ENCODE measurements at regions of chr12 and their contacts with region 1.

Region 1: GRCh38 chr12:88960213-88960878 is 380.1 kb upstream of the KITLG start:
- DNase-seq: no peak
- ATAC-seq: no peak

Region 2: DNA sequence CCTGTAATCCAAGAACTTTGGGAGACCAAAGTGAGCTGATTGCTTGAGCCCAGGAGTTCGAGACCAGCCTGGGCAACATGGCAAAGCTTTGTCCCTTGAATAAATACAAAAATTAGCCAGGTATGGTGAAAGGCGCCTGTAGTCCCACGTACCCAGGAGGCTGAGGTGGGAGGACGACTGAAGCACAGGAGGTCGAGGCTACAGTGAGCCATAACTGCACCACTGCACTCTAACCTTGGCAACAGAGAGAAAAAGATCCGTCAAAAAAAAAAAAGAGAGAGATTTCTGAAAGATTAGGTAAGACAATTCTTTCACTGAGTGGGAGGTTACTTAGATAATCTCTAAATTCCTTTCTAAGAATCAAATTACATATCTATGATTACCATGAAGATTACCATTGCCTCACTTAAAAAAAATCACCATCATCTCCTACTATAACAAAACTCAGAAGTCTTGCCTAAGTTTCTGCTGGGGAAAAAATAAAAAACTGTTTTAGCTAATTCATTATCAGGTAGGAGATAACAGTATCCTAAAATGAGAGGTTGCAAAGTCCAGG is 25.2 kb after region 1 on chr12:
- intact Hi-C with region 1: loop called (anchors 1 kb)
- DNase-seq: no peak
- ATAC-seq: no peak

Measured in Right ventricle myocardium inferior (tissue), 1 donor.